Cardiac septum (tissue), 1 donor: ENCODE measurements at regions of chr1 and their contacts with region 1.

Region 1: GRCh38 chr1:216983823-216984222 is 260.6 kb upstream of the ESRRG start:
- DNase-seq: no peak

Region 2: GRCh38 chr1:216640100-216640499 is 343.7 kb before region 1 on chr1:
- intact Hi-C with region 1: no loop called
- DNase-seq: no peak

Region 3: GRCh38 chr1:216815260-216816131 is 168.3 kb before region 1 on chr1:
- intact Hi-C with region 1: loop called (anchors 10 kb)
- DNase-seq: no peak

Region 4: DNA sequence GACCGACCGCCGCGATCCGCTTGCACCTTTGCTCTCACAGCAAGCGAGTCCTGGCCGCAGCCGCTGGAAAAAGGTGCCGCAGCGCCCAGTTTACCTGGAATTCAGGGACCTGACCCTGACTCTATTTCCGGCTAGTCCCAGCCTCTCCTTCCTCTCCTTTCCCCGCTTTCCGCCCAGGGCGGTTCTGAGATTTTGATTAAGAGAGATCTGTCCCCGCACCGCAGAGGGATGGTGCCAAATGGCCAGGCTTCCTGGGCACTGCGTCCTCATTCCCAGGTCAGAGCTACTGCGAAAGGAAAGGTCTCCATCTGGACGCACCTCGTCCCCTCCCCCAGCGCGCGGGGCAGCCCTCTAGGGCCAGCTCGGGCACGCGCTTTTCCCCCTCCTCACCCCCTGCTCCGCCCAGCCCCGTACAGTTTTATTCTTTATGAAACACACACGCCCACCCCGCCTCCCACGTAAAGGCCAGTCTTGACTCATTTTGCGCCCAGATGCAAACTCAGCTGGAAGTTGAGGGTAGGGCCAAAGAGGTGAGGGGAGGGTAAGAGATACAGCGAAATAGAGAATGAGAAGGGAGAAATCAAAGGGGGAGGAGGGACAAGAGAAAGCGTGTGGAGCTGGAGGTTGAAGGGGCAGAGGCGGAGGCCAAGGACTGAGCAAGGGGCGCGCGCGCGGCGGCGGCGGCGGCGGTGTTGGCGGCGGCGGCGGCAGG is 151.2 kb after region 1 on chr1:
- intact Hi-C with region 1: loop called (anchors 10 kb)
- DNase-seq: no peak